Naive thymus-derived CD4-positive, alpha-beta T cell (primary cell): ENCODE measurements at regions of chr3 and their contacts with region 1.

Region 1: DNA sequence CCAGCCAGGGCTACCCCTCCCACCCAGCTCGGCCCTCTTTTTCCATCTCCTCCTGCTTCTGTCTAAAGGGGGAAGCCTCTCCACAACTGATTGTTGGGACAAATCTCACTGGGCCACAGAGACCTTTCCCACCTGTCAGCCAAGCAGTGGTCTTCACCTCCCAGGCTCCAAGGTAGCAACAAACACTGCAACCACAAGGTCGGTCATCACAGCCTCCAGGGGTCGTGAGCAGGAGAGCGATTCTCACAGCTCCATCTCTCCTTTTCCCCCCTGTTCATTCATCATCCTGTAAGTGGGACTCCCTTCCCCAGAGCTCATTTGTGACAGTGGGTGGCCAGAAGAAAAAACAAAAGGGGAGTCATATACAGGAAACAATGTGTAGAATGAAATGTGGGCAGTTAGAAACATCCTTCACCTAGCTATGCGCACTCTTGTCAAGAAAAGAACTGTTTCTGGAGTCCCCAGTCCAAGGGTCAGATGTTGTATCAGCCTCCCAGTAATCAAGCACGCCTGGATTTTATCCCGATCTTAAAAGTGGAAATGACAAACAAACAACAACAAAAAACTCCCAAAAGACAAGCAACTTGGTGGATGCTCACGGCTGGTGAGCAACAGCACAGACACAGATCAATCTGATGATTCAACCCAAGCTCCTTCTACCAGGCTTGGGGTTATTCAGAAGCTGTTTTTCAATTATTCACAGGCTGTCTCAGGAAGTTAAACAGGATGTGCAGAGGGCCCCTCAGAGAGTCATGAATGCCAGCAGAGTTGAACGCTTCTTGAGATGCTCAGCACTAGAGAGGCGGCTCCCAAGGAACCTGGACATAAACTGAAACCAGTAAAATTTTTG is 22.4 kb downstream of the LYZL4 start:
- DNase-seq: peak in 7 of 9 donors; percentile 33 to 72 (median 48)
- ATAC-seq: peak; percentile 78
- H3K4me3 ChIP-seq: no peak overlapping the region
- H3K4me3 Mint-ChIP-seq: peak overlapping the region; percentile 33 to 86 (median 72)
- H3K27ac ChIP-seq: peak overlapping the region; percentile 59
- H3K27ac Mint-ChIP-seq: peak overlapping the region; percentile 65 to 99 (median 96)
- H3K4me1 ChIP-seq: peaks cover 0 to 28% of the 10 kb centered on the region in 2 donors
- H3K4me1 Mint-ChIP-seq: peaks cover 19 to 57% (median 24%) of the 10 kb centered on the region in 7 donors
- H3K27me3 ChIP-seq: no peaks in the 10 kb centered on the region
- H3K27me3 Mint-ChIP-seq: peaks cover 0 to 10% (median 0%) of the 10 kb centered on the region in 5 donors

Region 2: GRCh38 chr3:42345811-42346210 is 42.2 kb before region 1 on chr3:
- CTCF ChIA-PET with region 1: no interaction called
- POLR2A ChIA-PET with region 1: interaction called, 15 read pairs
- intact Hi-C with region 1: loop called in 1 of 2 experiments (anchors 1 kb)
- DNase-seq: peak in 6 of 9 donors; percentile 9 to 71 (median 49)
- ATAC-seq: no peak
- H3K4me3 ChIP-seq: no peak overlapping the region
- H3K4me3 Mint-ChIP-seq: peak overlapping the region in 6 of 10 donors; percentile 43 to 76 (median 62)
- H3K27ac ChIP-seq: peak overlapping the region; percentile 62
- H3K27ac Mint-ChIP-seq: peak overlapping the region in 7 of 9 donors; percentile 67 to 92 (median 86)
- H3K4me1 ChIP-seq: peaks cover 4 to 23% of the 10 kb centered on the region in 2 donors
- H3K4me1 Mint-ChIP-seq: peaks cover 0 to 50% (median 4%) of the 10 kb centered on the region in 7 donors
- H3K27me3 ChIP-seq: no peaks in the 10 kb centered on the region
- H3K27me3 Mint-ChIP-seq: peaks cover 0 to 9% (median 0%) of the 10 kb centered on the region in 5 donors

Region 3: GRCh38 chr3:42353632-42354031 is 34.4 kb before region 1 on chr3:
- CTCF ChIA-PET with region 1: interaction called, 3 read pairs
- POLR2A ChIA-PET with region 1: interaction called, 11 read pairs
- intact Hi-C with region 1: no loop called
- DNase-seq: no peak
- ATAC-seq: no peak
- H3K4me3 ChIP-seq: no peak overlapping the region
- H3K4me3 Mint-ChIP-seq: no peak overlapping the region
- H3K27ac ChIP-seq: no peak overlapping the region
- H3K27ac Mint-ChIP-seq: no peak overlapping the region
- H3K4me1 ChIP-seq: peaks cover 0 to 7% of the 10 kb centered on the region in 2 donors
- H3K4me1 Mint-ChIP-seq: peaks cover 0 to 40% (median 4%) of the 10 kb centered on the region in 7 donors
- H3K27me3 ChIP-seq: no peaks in the 10 kb centered on the region
- H3K27me3 Mint-ChIP-seq: peaks cover 0 to 15% (median 0%) of the 10 kb centered on the region in 5 donors

Region 4: DNA sequence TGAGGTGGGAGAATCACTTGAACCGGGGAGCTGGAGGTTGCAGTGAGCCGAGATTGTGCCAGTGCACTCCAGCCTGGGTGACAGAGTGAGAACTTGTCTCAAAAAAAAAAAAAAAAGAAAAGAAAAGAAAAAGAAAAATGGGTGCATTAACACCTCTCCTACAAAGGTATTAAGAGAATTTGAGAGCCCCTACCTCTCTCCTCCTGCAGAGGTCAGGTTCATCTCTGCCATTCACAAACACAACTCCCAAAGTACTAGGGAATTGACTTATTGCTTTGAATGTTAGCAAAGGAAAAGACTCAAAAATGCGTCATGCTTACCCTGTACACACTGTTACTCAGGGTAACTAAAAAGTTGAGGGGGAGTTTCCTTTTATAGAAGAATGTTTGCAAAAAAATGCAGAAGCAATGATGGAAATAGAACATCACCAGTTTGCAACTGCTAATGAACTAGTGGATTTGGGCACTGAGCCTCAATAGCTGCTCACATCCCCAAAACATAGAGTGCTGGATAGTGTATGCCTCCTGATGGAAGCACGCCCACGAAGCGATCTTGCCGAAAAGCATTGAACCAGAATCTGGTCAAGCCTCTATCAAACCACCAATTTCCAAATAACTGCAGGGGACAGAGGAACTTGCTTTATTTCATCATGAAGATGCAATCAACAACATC is 37.8 kb after region 1 on chr3:
- CTCF ChIA-PET with region 1: no interaction called
- POLR2A ChIA-PET with region 1: no interaction called
- intact Hi-C with region 1: loop called in 1 of 2 experiments (anchors 5 kb)
- DNase-seq: no peak
- ATAC-seq: no peak
- H3K4me3 ChIP-seq: no peak overlapping the region
- H3K4me3 Mint-ChIP-seq: no peak overlapping the region
- H3K27ac ChIP-seq: no peak overlapping the region
- H3K27ac Mint-ChIP-seq: no peak overlapping the region
- H3K4me1 ChIP-seq: no peaks in the 10 kb centered on the region
- H3K4me1 Mint-ChIP-seq: no peaks in the 10 kb centered on the region
- H3K27me3 ChIP-seq: no peaks in the 10 kb centered on the region
- H3K27me3 Mint-ChIP-seq: peaks cover 0 to 13% (median 7%) of the 10 kb centered on the region in 5 donors